ENCODE measurements at regions of chr4 and their contacts with region 1.

Region 1: GRCh38 chr4:168183717-168184608 is 91.6 kb downstream of the ANXA10 start:
- DNase-seq: peak; percentile 18
- H3K4me3 ChIP-seq: no peak overlapping the region
- H3K27ac ChIP-seq: no peak overlapping the region
- H3K4me1 ChIP-seq: no peaks in the 10 kb centered on the region
- CTCF ChIP-seq: peak; percentile 81

Region 2: DNA sequence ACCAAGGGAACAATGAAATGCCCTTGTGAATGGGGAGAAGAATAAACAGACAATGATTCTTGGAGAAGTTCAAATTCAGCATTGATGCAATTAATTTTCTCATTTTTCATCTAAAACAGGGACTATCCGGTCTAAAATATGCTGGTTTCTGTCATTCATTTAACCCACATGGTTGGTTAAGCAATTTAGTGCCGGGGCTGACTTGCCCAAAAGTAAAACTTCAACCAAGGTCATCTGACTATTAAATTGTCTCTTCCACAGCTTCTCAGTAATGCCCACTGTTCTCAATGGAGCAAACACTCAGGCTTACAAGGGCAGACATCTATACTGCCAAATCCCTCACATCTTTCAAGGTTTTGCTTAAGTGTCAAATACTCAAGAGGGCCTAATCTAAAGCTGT is 40.4 kb before region 1 on chr4:
- CTCF ChIA-PET with region 1: no interaction called
- POLR2A ChIA-PET with region 1: no interaction called
- intact Hi-C with region 1: no loop called
- DNase-seq: no peak
- H3K4me3 ChIP-seq: no peak overlapping the region
- H3K27ac ChIP-seq: no peak overlapping the region
- H3K4me1 ChIP-seq: no peaks in the 10 kb centered on the region
- CTCF ChIP-seq: no peak

Region 3: GRCh38 chr4:168167714-168168284 is 16.2 kb before region 1 on chr4:
- CTCF ChIA-PET with region 1: no interaction called
- POLR2A ChIA-PET with region 1: no interaction called
- intact Hi-C with region 1: loop called (anchors 1 kb)
- DNase-seq: no peak
- H3K4me3 ChIP-seq: no peak overlapping the region
- H3K27ac ChIP-seq: no peak overlapping the region
- H3K4me1 ChIP-seq: no peaks in the 10 kb centered on the region
- CTCF ChIP-seq: no peak

Region 4: GRCh38 chr4:168917138-168917779 is 733.3 kb after region 1 on chr4:
- CTCF ChIA-PET with region 1: no interaction called
- POLR2A ChIA-PET with region 1: no interaction called
- intact Hi-C with region 1: loop called (anchors 10 kb)
- DNase-seq: peak; percentile 27
- H3K4me3 ChIP-seq: no peak overlapping the region
- H3K27ac ChIP-seq: no peak overlapping the region
- H3K4me1 ChIP-seq: no peaks in the 10 kb centered on the region
- CTCF ChIP-seq: peak; percentile 78